Mammary epithelial cell (primary cell): ENCODE measurements at regions of chr1 and their contacts with region 1.

Region 1: GRCh38 chr1:159891275-159892157 is 8.4 kb downstream of the CFAP45 start:
- DNase-seq: peak; percentile 76
- H3K4me3 ChIP-seq: no peak overlapping the region
- H3K27ac ChIP-seq: no peak overlapping the region
- H3K4me1 ChIP-seq: peaks cover 21% of the 10 kb centered on the region
- H3K27me3 ChIP-seq: no peaks in the 10 kb centered on the region
- CTCF ChIP-seq: peak; percentile 100

Region 2: DNA sequence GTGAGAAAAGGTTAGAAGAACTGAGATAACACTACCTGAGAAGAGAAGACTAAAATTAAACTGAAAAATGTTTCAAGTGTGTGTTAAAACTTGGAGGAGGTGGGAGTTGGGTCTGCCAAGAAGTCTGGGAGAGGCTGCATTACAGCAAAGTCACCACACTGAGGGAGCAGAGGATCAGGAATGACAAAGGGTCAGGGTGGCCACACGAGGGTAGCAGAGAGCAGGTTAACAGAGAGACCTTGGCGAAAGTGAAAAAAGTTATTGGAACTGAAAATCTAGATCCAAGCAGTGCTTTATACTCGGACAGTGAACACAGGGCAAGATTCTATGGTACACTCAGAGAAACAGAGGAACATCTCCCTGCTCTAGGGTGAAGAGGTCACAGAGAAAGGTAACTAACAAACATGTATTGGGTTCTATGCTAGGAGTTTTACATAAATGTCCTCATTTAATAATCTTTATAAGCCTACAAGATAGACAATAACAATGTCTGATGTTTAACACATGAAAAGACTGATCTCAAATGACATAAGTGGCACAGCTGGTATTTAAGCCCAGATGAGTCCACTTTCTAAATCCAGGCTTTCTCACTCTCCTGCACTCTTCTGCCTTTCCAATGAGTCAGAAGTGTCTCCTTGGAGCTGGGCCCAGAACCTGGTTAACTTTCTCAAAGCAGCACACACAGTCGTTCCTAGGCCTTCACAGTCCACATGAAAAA is 730.4 kb before region 1 on chr1:
- CTCF ChIA-PET with region 1: interaction called, 6 read pairs
- dilution Hi-C with region 1: no loop called
- in situ Hi-C with region 1: loop called in 1 of 2 experiments (anchors 25 kb)
- intact Hi-C with region 1: loop called (anchors 1 kb)
- DNase-seq: peak; percentile 81
- H3K4me3 ChIP-seq: no peak overlapping the region
- H3K27ac ChIP-seq: no peak overlapping the region
- H3K4me1 ChIP-seq: peaks cover 13% of the 10 kb centered on the region
- H3K27me3 ChIP-seq: peaks cover 5% of the 10 kb centered on the region
- CTCF ChIP-seq: peak; percentile 100

Region 3: DNA sequence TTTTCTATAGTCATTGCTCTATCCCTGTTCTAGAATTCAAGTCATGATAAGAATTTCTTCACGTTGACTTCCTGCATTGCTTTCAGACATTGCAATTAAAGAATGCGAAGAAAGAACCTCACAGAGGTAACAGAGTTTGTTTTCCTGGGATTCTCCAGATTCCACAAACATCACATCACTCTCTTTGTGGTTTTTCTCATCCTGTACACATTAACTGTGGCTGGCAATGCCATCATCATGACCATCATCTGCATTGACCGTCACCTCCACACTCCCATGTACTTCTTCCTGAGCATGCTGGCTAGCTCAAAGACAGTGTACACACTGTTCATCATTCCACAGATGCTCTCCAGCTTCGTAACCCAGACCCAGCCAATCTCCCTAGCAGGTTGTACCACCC is 293.3 kb before region 1 on chr1:
- CTCF ChIA-PET with region 1: no interaction called
- dilution Hi-C with region 1: loop called (anchors 25 kb)
- in situ Hi-C with region 1: no loop called
- intact Hi-C with region 1: loop called (anchors 10 kb)
- DNase-seq: peak; percentile 93
- H3K4me3 ChIP-seq: no peak overlapping the region
- H3K27ac ChIP-seq: peak overlapping the region; percentile 67
- H3K4me1 ChIP-seq: peaks cover 23% of the 10 kb centered on the region
- H3K27me3 ChIP-seq: no peaks in the 10 kb centered on the region
- CTCF ChIP-seq: no peak

Region 4: GRCh38 chr1:159798893-159799292 is 92.6 kb before region 1 on chr1:
- CTCF ChIA-PET with region 1: interaction called, 23 read pairs
- dilution Hi-C with region 1: loop called (anchors 5 kb)
- in situ Hi-C with region 1: loop called (anchors 5 kb)
- intact Hi-C with region 1: loop called (anchors 1 kb)
- DNase-seq: peak; percentile 76
- H3K4me3 ChIP-seq: no peak overlapping the region
- H3K27ac ChIP-seq: no peak overlapping the region
- H3K4me1 ChIP-seq: no peaks in the 10 kb centered on the region
- H3K27me3 ChIP-seq: peaks cover 2% of the 10 kb centered on the region
- CTCF ChIP-seq: peak; percentile 80 to 82

Region 5: GRCh38 chr1:159924981-159925712 is 33.6 kb after region 1 on chr1 and contains the start of gene TAGLN2:
- CTCF ChIA-PET with region 1: no interaction called
- dilution Hi-C with region 1: no loop called
- in situ Hi-C with region 1: no loop called
- intact Hi-C with region 1: loop called (anchors 1 kb)
- DNase-seq: peak; percentile 93
- H3K4me3 ChIP-seq: peak within 1 kb of the TSS; percentile 62 to 93 (median 77)
- H3K27ac ChIP-seq: peak within 1 kb of the TSS; percentile 98
- H3K4me1 ChIP-seq: peaks cover 44% of the 10 kb centered on the region
- H3K27me3 ChIP-seq: no peaks in the 10 kb centered on the region
- CTCF ChIP-seq: no peak
- total RNA-seq, gene TAGLN2: 178 to 454 TPM

Region 6: DNA sequence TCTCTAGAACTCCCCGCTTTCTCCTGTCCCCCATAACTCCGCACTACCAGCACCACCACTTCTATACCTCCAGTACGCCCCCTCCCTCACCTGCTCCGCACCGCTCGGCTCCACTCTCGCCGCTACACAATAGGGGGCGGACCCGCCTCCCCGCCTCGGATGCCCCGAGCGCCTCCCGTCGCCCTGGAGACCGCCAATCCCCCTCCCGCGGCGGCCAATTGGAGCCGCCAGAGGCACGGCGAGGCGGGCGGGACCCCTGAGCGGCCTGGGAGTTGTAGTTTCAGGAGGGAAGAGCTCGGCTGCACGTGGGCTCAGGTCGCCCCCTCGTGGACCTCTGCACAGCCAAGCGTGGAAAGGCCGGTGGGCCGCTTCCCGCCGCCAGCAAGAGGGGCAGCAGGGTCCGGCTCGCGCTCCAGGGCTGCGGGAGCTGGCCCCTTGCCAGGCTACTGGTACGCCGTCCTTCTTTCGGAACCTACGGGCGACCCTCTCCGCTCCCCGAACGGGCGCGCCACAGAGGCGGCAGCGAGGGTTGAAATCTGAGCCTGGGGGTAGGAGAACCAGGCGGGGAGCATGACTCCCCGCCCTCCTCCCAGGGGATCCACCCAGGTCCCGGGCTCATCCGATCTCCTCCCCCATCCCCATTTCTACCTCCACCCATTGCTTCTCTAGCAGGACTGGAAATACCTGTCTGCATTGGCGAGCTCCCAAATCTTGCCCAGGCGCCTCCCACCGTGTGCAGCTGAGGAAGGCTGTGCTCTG is 54.1 kb after region 1 on chr1 and contains the start of gene IGSF9:
- CTCF ChIA-PET with region 1: no interaction called
- dilution Hi-C with region 1: loop called (anchors 5 kb)
- in situ Hi-C with region 1: no loop called
- intact Hi-C with region 1: no loop called
- DNase-seq: peak; percentile 93
- H3K4me3 ChIP-seq: peak within 1 kb of the TSS; percentile 47 to 72 (median 65)
- H3K27ac ChIP-seq: peak within 1 kb of the TSS; percentile 53
- H3K4me1 ChIP-seq: peaks cover 33% of the 10 kb centered on the region
- H3K27me3 ChIP-seq: no peaks in the 10 kb centered on the region
- CTCF ChIP-seq: peak; percentile 7 to 53
- total RNA-seq, gene IGSF9: 1.2 to 21.9 TPM

Region 7: DNA sequence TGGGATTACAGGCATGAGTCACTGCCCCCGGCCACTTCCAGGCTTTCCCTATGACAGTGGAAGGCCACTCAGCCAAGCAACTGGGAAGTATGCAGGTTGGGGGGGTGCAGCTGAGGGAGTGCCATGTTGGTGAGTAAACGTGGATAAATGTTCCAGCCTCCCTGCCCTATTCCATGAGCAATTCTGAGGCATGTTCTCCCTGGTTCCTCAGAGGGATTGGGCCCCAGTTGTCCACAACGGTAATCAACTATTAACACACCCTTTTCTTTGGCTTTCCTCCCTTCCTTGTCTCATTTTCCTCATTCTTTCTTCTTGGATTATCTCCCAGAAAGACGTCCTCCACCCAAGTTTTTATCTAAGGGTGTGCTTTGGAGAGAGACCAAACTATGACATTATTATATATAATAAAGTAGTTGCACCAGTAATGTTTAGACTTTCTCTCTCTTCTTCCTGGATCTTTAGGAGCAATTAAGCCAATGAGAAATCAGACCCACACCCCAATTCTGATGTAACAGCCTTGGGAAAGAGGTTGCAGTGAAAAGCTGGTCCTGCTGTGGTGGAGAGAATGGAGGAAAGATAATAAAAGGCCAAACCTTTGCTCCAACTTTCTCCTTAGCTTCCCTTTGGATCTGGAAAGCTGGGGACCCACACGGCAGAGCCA is 69.3 kb after region 1 on chr1:
- CTCF ChIA-PET with region 1: no interaction called
- dilution Hi-C with region 1: loop called (anchors 5 kb)
- in situ Hi-C with region 1: no loop called
- intact Hi-C with region 1: no loop called
- DNase-seq: peak; percentile 81
- H3K4me3 ChIP-seq: peak overlapping the region in 1 of 3 experiments; percentile 17
- H3K27ac ChIP-seq: peak overlapping the region; percentile 71
- H3K4me1 ChIP-seq: peaks cover 22% of the 10 kb centered on the region
- H3K27me3 ChIP-seq: no peaks in the 10 kb centered on the region
- CTCF ChIP-seq: no peak